IMR-90 (cell line): ENCODE measurements at regions of chr10 and their contacts with region 1.

Region 1: GRCh38 chr10:101569838-101570766 is 18.0 kb downstream of the POLL start:
- DNase-seq: peak; percentile 35
- ATAC-seq: peak; percentile 91
- H3K4me3 ChIP-seq: peak overlapping the region; percentile 49
- H3K27ac ChIP-seq: no peak overlapping the region
- H3K4me1 ChIP-seq: peaks cover 6% of the 10 kb centered on the region
- H3K27me3 ChIP-seq: peaks cover 43% of the 10 kb centered on the region
- CTCF ChIP-seq: peak; percentile 64
- POLR2A ChIP-seq: 0 out of 2 replicates have a peak, but pooled peaks have one; percentile 12
- RAD21 ChIP-seq: peak; percentile 70

Region 2: DNA sequence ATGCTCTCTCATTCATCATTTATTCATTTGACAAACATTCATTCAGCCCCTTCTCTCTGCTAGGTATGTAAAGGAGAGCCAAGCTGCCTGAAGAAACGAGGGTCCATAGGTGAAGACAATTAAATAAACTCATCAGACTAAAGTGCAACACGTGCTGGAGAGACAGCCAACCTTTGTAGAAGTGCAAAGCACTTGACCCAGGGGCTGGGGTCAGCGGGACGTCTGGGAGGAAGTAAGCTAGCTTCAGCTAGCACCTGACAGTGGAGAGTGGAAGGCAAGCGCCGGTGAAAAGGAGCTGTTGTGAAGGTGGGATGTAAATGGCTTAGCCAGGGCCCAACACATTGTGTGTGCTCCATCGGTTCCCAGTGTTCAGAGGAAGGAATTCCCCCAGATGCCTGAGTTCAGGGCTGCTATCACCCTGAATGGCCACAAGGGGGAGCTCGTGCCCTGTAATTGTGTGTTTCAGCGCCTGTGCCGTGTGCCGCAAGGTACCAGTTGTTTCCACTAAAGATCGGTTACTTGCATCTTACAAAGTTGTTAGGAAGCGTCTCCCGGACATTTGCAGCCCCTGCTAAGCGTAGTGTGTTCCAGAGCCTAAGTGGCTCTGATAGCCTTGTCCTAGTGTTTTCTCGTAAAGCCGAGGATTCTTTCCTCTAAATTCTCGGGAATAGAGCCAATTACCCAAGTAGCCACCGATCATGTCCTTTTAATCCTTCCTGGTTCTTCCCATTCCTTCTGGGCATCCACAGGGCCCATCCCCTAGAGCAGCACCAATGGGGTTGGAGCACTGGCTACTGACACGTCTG is 408.4 kb before region 1 on chr10:
- CTCF ChIA-PET with region 1: no interaction called
- POLR2A ChIA-PET with region 1: no interaction called
- dilution Hi-C with region 1: no loop called
- in situ Hi-C with region 1: no loop called
- intact Hi-C with region 1: loop called (anchors 1 kb)
- DNase-seq: peak; percentile 65
- ATAC-seq: peak; percentile 97
- H3K4me3 ChIP-seq: peak overlapping the region; percentile 28
- H3K27ac ChIP-seq: no peak overlapping the region
- H3K4me1 ChIP-seq: no peaks in the 10 kb centered on the region
- H3K27me3 ChIP-seq: peaks cover 40% of the 10 kb centered on the region
- CTCF ChIP-seq: peak; percentile 94
- POLR2A ChIP-seq: no peak
- RAD21 ChIP-seq: peak; percentile 82

Region 3: GRCh38 chr10:101272229-101272868 is 297.8 kb before region 1 on chr10:
- CTCF ChIA-PET with region 1: interaction called, 3 read pairs
- POLR2A ChIA-PET with region 1: no interaction called
- dilution Hi-C with region 1: no loop called
- in situ Hi-C with region 1: no loop called
- intact Hi-C with region 1: loop called (anchors 1 kb)
- DNase-seq: peak; percentile 54
- ATAC-seq: peak; percentile 99
- H3K4me3 ChIP-seq: no peak overlapping the region
- H3K27ac ChIP-seq: no peak overlapping the region
- H3K4me1 ChIP-seq: no peaks in the 10 kb centered on the region
- H3K27me3 ChIP-seq: peaks cover 41% of the 10 kb centered on the region
- CTCF ChIP-seq: peak; percentile 76
- POLR2A ChIP-seq: no peak
- RAD21 ChIP-seq: peak; percentile 61

Region 4: GRCh38 chr10:101297901-101298486 is 272.1 kb before region 1 on chr10:
- CTCF ChIA-PET with region 1: no interaction called
- POLR2A ChIA-PET with region 1: no interaction called
- dilution Hi-C with region 1: no loop called
- in situ Hi-C with region 1: no loop called
- intact Hi-C with region 1: loop called (anchors 2 kb)
- DNase-seq: peak; percentile 39
- ATAC-seq: peak; percentile 89
- H3K4me3 ChIP-seq: no peak overlapping the region
- H3K27ac ChIP-seq: no peak overlapping the region
- H3K4me1 ChIP-seq: no peaks in the 10 kb centered on the region
- H3K27me3 ChIP-seq: peaks cover 68% of the 10 kb centered on the region
- CTCF ChIP-seq: peak; percentile 67
- POLR2A ChIP-seq: no peak
- RAD21 ChIP-seq: no peak

Region 5: DNA sequence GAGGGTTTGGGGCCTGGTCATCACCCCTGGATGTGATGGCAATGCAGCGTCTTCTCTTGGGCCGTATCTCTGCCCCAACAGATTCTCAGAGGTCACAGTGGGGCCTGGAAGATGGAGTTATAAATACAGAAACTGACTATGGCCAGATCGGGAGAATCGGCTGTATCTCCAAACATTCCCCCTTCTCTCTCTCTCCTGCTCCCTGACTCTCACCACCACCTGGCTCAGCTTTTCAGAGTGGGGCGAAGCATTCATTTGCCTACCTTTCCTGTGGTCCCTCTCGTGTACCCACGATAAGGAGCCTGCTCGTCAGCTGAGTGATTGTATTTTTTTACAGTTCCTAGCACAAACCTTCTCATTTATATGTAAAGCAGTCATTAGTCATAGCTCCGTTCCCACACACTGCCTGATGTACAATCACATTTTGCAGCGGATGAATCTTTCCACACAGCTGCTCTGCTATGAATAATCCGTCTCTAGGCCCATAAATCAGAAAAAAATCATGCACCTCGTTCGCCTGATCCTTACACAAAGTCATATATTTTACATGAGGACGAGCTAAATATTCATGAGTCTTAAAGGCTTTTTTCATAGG is 239.4 kb before region 1 on chr10:
- CTCF ChIA-PET with region 1: no interaction called
- POLR2A ChIA-PET with region 1: no interaction called
- dilution Hi-C with region 1: no loop called
- in situ Hi-C with region 1: no loop called
- intact Hi-C with region 1: no loop called
- DNase-seq: peak; percentile 80
- ATAC-seq: no peak
- H3K4me3 ChIP-seq: no peak overlapping the region
- H3K27ac ChIP-seq: no peak overlapping the region
- H3K4me1 ChIP-seq: peaks cover 2% of the 10 kb centered on the region; the same call in 1 of the 2 replicates
- H3K27me3 ChIP-seq: peaks cover 45% of the 10 kb centered on the region
- CTCF ChIP-seq: no peak
- POLR2A ChIP-seq: no peak
- RAD21 ChIP-seq: no peak

Region 6: GRCh38 chr10:102132563-102133372 is 562.7 kb after region 1 on chr10 and contains the start of gene PPRC1:
- CTCF ChIA-PET with region 1: no interaction called
- POLR2A ChIA-PET with region 1: no interaction called
- dilution Hi-C with region 1: no loop called
- in situ Hi-C with region 1: no loop called
- intact Hi-C with region 1: no loop called
- DNase-seq: peak; percentile 99
- ATAC-seq: peak; percentile 90
- H3K4me3 ChIP-seq: peak within 1 kb of the TSS; percentile 61
- H3K27ac ChIP-seq: peak within 1 kb of the TSS; percentile 96
- H3K4me1 ChIP-seq: peaks cover 10% of the 10 kb centered on the region
- H3K27me3 ChIP-seq: no peaks in the 10 kb centered on the region
- CTCF ChIP-seq: peak; percentile 80
- POLR2A ChIP-seq: peak; percentile 95
- RAD21 ChIP-seq: peak; percentile 55
- total RNA-seq, gene PPRC1: 11.4 and 11.8 TPM in 2 replicates

Region 7: DNA sequence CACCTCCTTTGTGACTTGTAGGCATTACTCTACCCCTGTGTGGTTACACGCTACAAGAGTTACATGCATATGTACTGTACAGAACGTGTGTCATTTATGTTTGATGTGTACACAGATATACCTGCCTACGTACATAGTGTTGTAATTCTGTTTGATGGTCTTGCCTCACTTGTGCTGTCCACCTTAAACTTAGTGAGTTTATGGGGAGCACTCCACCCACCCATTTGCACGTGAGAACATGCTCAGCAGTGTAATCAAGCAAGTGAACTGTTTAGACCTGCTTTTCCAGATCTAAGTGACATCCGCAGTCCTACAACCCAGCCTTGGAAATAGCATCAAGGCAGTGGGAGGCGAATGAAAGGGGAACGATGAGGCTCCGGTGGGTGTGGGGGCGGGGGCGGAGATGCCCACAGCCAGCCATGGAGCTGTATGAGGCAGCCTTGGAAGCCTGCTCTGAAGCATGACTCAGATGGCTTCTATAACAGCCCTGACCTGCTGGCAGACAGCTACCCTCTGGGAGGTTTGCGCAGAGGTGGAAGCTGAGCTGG is 985.8 kb after region 1 on chr10:
- CTCF ChIA-PET with region 1: no interaction called
- POLR2A ChIA-PET with region 1: no interaction called
- dilution Hi-C with region 1: no loop called
- in situ Hi-C with region 1: no loop called
- intact Hi-C with region 1: no loop called
- DNase-seq: peak; percentile 88
- ATAC-seq: peak; percentile 98
- H3K4me3 ChIP-seq: no peak overlapping the region
- H3K27ac ChIP-seq: no peak overlapping the region
- H3K4me1 ChIP-seq: peaks cover 5% of the 10 kb centered on the region
- H3K27me3 ChIP-seq: no peaks in the 10 kb centered on the region
- CTCF ChIP-seq: no peak
- POLR2A ChIP-seq: no peak
- RAD21 ChIP-seq: no peak